ENCODE measurements at regions of chrX and their contacts with region 1.

Region 1: GRCh38 chrX:55867181-55867651 is 149.7 kb downstream of the RRAGB start:
- DNase-seq: peak; percentile 86
- ATAC-seq: peak; percentile 93
- H3K4me3 ChIP-seq: no peak overlapping the region
- H3K27ac ChIP-seq: peak overlapping the region; percentile 57
- H3K4me1 ChIP-seq: peaks cover 8% of the 10 kb centered on the region
- H3K27me3 ChIP-seq: no peaks in the 10 kb centered on the region
- CTCF ChIP-seq: no peak
- EP300 ChIP-seq: no peak; a peak in 1 of 4 replicates
- POLR2A ChIP-seq: no peak
- RAD21 ChIP-seq: peak; percentile 32; the same call in 1 of the 2 replicates

Region 2: GRCh38 chrX:55754861-55755294 is 112.3 kb before region 1 on chrX:
- CTCF ChIA-PET with region 1: no interaction called
- POLR2A ChIA-PET with region 1: interaction called, 3 read pairs
- RAD21 ChIA-PET with region 1: interaction called, 6 read pairs
- SMC1A ChIA-PET with region 1: interaction called, 4 read pairs
- in situ Hi-C with region 1: no loop called
- intact Hi-C with region 1: loop called (anchors 10 kb)
- DNase-seq: peak; percentile 64
- ATAC-seq: peak; percentile 97
- H3K4me3 ChIP-seq: no peak overlapping the region
- H3K27ac ChIP-seq: peak overlapping the region; percentile 41
- H3K4me1 ChIP-seq: peaks cover 2% of the 10 kb centered on the region
- H3K27me3 ChIP-seq: no peaks in the 10 kb centered on the region
- CTCF ChIP-seq: no peak
- EP300 ChIP-seq: peak in 1 of 2 experiments; percentile 39; a peak in 2 of 4 replicates
- POLR2A ChIP-seq: no peak
- RAD21 ChIP-seq: no peak

Region 3: GRCh38 chrX:55794405-55794804 is 72.8 kb before region 1 on chrX:
- CTCF ChIA-PET with region 1: no interaction called
- POLR2A ChIA-PET with region 1: interaction called, 3 read pairs
- RAD21 ChIA-PET with region 1: no interaction called
- SMC1A ChIA-PET with region 1: no interaction called
- in situ Hi-C with region 1: no loop called
- intact Hi-C with region 1: loop called (anchors 5 kb)
- DNase-seq: peak; percentile 73
- ATAC-seq: peak; percentile 99
- H3K4me3 ChIP-seq: no peak overlapping the region
- H3K27ac ChIP-seq: peak overlapping the region; percentile 38
- H3K4me1 ChIP-seq: no peaks in the 10 kb centered on the region
- H3K27me3 ChIP-seq: no peaks in the 10 kb centered on the region
- CTCF ChIP-seq: no peak
- EP300 ChIP-seq: no peak
- POLR2A ChIP-seq: no peak
- RAD21 ChIP-seq: no peak

Measured in GM12878 (cell line).